Ovary (tissue), 10 donors: ENCODE measurements at regions of chr5 and their contacts with region 1.

Region 1: GRCh38 chr5:91419571-91420537 is 36.7 kb upstream of the ARRDC3 start:
- DNase-seq: peak; percentile 35 to 75 (median 56)
- H3K4me3 ChIP-seq: no peak overlapping the region
- H3K27ac ChIP-seq: no peak overlapping the region
- H3K4me1 ChIP-seq: no peaks in the 10 kb centered on the region
- H3K27me3 ChIP-seq: no peaks in the 10 kb centered on the region
- CTCF ChIP-seq: peak; percentile 49 to 70 (median 63)
- EP300 ChIP-seq: no peak
- POLR2A ChIP-seq: no peak

Region 2: GRCh38 chr5:90854169-90854568 is 565.7 kb before region 1 on chr5:
- intact Hi-C with region 1: loop called in 1 of 4 experiments (anchors 10 kb)
- DNase-seq: no peak
- H3K4me3 ChIP-seq: no peak overlapping the region
- H3K27ac ChIP-seq: no peak overlapping the region
- H3K4me1 ChIP-seq: no peaks in the 10 kb centered on the region
- H3K27me3 ChIP-seq: no peaks in the 10 kb centered on the region
- CTCF ChIP-seq: no peak
- EP300 ChIP-seq: no peak
- POLR2A ChIP-seq: no peak

Region 3: DNA sequence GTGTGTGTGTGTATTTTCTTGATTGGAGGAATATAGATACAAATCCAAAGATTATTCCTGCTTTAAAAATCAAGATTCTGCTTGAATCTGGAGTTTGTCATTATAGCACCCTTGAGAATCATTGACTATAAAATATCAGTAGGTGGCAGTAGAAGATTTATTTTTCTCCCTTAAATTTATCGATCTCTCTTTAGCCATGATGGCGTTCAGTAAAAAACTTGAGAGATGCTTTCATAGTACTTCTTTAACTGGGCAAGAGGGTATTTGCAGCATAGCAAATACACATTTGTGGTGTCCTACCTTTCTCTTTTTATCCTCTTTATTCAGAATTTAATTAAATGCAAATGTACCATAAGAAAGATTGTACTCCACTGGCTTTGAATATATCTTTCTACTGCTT is 553.5 kb before region 1 on chr5:
- intact Hi-C with region 1: loop called in 3 of 4 experiments (anchors 5 to 10 kb)
- DNase-seq: no peak
- H3K4me3 ChIP-seq: no peak overlapping the region
- H3K27ac ChIP-seq: no peak overlapping the region
- H3K4me1 ChIP-seq: peaks cover 2% of the 10 kb centered on the region
- H3K27me3 ChIP-seq: no peaks in the 10 kb centered on the region
- CTCF ChIP-seq: peak; percentile 27 to 46 (median 42)
- EP300 ChIP-seq: no peak
- POLR2A ChIP-seq: no peak

Region 4: DNA sequence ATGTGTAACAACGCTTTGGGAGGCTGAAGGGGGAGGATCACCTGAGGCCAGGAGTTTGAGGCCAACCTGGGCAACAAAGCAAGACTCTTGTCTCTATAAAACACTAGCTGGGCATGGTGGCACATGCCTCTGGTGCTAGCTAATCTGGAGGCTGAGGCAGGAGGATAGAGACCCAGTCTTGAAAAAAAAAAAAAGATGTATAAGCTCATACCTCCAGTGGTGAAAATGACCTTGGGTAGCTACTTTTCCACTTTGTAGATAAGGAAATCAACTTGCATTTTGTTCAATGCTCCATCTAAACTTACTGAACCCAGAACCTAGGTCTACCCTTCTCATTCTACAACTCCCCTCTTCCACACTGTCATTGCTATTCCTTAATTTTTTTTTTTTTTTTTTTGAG is 53.3 kb before region 1 on chr5:
- intact Hi-C with region 1: no loop called
- DNase-seq: no peak
- H3K4me3 ChIP-seq: no peak overlapping the region
- H3K27ac ChIP-seq: no peak overlapping the region
- H3K4me1 ChIP-seq: no peaks in the 10 kb centered on the region
- H3K27me3 ChIP-seq: peaks cover 3% of the 10 kb centered on the region
- CTCF ChIP-seq: no peak
- EP300 ChIP-seq: no peak
- POLR2A ChIP-seq: no peak